Dorsolateral prefrontal cortex (tissue), 120 donors: ENCODE measurements at regions of chr1 and their contacts with region 1.

Region 1: GRCh38 chr1:64823691-64824476 is 79.0 kb downstream of the RAVER2 start:
- DNase-seq: peak in 7 of 10 donors; percentile 45 to 83 (median 56)
- H3K4me3 ChIP-seq: peak overlapping the region in 30 of 59 donors; percentile 4 to 43 (median 25)
- H3K27ac ChIP-seq: peak overlapping the region in 7 of 59 donors; percentile 8 to 54 (median 25)
- H3K27me3 ChIP-seq: no peaks in the 10 kb centered on the region
- CTCF ChIP-seq: peak; percentile 82 to 99 (median 94)

Region 2: DNA sequence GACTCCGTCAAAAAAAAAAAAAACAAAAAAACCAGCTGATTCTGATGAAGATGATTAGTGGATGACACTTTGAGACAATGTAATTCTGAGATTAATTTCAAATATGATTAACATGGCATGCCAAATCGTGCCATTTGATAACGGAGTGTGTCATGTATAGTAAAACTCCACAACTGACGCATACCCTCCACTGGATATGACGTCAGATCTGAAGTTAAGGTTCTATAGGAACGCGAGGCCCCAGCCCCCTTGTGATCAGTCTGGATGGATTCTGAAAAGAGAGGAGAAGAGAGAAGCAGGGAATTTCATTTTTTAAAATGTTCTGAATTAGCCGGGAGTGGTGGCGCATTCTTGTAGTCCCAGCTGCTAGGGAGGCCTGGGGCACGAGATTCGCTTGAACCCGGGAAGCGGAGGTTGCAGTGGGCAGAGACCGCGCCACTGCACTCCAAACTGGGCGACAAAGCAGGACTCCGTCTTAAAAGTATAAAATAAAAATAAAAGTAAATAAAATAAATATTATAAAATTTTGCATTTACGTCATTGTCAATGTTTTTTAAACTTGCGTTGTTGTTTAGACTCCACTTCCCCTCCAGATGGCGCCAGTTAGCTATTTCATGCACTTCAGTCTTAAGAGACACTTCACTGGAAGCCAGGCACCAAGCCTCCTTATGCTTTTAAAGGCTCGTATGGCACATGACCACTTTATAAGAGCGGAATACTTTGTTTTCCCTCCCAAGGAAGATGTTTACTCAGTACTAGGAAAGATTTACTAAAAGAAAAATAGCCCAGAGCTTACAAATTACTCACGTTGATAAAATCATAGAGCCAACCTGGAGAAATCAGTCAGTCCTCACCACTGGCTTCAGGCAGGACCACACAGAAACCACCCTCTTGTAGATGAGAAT is 555.0 kb before region 1 on chr1:
- intact Hi-C with region 1: loop called (anchors 2 to 5 kb)
- DNase-seq: peak in 6 of 10 donors; percentile 54 to 79 (median 60)
- H3K4me3 ChIP-seq: peak overlapping the region in 39 of 59 donors; percentile 1 to 55 (median 38)
- H3K27ac ChIP-seq: peak overlapping the region in 2 of 59 donors; percentile 6 to 34
- H3K27me3 ChIP-seq: no peaks in the 10 kb centered on the region
- CTCF ChIP-seq: peak; percentile 69 to 96 (median 88)

Region 3: DNA sequence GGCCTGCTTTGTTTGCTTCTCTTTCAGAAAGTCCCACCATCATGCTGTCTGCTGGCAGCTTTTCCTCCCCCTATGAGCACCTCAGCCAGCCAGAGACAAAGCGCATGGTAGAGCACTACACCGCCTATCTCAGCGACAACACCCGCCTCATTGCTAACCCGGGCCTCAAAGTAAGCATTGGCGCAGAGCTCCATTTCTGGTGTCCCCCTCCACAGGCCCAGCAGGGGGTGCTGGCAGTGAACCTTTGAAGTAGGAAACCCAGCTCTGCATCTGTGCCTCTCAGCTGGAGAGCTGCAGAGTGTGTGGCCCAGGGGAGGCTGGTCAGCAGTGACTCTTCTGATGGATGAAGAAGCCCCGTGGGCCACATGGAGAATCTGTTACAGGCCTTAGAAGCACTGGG is 160.2 kb before region 1 on chr1:
- intact Hi-C with region 1: no loop called
- DNase-seq: peak in 2 of 10 donors; percentile 26 to 37
- H3K4me3 ChIP-seq: peak overlapping the region in 3 of 59 donors; percentile 8 to 28 (median 12)
- H3K27ac ChIP-seq: peak overlapping the region in 31 of 59 donors; percentile 8 to 71 (median 42)
- H3K27me3 ChIP-seq: no peaks in the 10 kb centered on the region
- CTCF ChIP-seq: peak in 32 of 56 donors; percentile 7 to 45 (median 25)

Region 4: DNA sequence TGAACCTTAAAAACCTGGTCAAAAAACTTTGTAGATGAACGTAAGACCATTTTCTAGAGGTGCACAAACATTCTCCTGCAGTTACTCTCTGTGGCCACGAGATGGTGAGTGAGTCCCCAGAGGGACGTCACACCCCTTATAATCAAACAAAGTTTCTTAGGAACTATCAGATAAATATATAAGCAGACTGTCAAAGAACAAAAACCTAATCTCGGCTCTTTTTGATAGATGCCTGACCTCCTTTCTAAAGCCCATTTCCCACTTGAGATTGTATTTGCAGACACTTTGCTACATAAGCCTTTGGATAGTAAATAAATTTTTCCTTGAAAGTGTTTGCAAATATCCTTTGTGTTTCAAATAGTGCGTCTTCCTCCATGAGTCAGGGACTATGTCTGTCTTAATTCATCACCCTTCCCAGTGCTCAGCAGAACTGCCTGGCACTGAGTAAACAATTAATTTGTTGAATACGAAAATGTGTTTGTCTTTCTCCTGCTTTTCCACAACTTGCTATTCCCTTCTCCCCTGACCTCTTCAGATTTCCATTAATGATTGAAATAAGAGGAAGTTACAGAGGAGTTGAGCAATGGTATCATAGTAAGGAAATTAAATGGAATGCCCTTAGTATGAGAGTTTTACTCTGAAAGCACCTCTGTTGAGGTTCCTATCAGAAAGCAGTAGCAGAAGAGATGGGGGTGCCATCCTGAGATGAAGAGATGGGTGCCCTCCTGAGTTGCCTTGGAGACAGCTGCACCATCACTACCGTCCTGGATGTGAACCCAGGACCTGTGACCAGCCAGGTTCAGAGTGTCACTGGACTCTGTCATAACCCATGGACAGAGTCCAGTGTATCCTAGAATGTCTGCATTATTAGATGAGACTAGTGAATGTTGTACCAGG is 136.8 kb before region 1 on chr1:
- intact Hi-C with region 1: loop called (anchors 5 kb)
- DNase-seq: peak in 1 of 10 donors; percentile 17
- H3K4me3 ChIP-seq: no peak overlapping the region
- H3K27ac ChIP-seq: peak overlapping the region in 7 of 59 donors; percentile 7 to 44 (median 11)
- H3K27me3 ChIP-seq: no peaks in the 10 kb centered on the region
- CTCF ChIP-seq: peak; percentile 53 to 90 (median 81)

Region 5: DNA sequence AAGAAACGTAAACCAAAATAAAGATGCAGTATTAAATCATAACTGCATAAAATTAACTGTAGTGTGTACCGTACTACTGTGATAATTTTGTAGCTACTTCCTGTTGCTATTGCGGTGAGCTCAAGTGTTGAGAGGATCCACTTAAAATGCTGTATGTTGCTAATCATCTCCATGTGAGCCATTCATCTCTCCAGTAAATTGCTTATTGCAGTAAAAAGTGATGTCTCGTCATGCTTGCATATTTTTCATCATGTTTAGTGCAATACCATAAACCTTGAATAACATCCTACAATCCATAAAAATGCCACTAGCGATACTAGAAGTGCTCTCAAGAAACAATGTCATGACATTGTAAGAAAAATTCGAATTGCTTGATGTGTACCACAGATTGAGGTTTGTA is 12.8 kb before region 1 on chr1:
- intact Hi-C with region 1: no loop called
- DNase-seq: no peak
- H3K4me3 ChIP-seq: no peak overlapping the region
- H3K27ac ChIP-seq: no peak overlapping the region
- H3K27me3 ChIP-seq: no peaks in the 10 kb centered on the region
- CTCF ChIP-seq: no peak

Region 6: DNA sequence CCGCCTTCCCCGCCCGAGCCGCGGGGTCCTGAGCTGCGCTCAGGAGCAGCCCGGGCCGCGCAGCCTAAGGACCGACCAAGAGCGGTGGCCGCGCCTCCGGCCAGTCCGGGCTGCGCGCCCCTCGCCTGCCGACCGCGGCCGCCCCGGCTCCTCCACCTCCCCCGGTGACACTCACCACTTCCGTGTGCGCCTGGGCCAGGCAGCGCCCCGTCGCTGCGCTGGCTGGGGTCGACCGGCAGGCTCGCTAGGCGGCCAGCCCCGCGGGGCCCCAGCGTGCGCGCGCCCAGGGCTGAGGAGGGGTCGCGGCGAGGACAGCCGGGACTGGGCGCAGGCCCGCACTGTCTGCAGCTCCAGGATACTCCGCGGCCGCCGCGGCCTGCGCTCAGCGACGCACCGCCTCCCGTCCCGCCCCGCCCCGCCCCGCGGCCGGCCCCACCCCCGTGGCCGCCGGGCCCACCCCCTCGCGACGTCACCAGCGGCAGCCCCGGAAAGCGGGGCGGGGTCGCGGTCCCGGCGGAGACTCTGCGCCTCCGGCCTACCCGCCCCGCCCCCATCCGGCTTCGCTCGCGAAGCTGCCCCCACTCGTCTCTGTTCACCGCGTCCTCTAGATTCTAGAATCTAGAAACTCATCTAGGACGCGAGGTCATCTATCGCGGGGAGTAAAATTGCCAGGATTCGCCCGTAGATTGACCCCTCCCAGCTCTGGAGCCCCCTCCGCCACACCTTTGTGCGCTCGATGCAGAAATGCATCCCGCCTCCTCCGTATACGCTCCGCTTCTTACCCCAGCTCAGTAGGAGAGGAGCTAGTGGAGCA is 142.5 kb after region 1 on chr1 and contains the start of gene JAK1:
- intact Hi-C with region 1: loop called in 1 of 2 experiments (anchors 10 kb)
- DNase-seq: peak; percentile 65 to 92 (median 83)
- H3K4me3 ChIP-seq: peak within 1 kb of the TSS; percentile 65 to 99 (median 87)
- H3K27ac ChIP-seq: peak within 1 kb of the TSS; percentile 39 to 96 (median 88)
- H3K27me3 ChIP-seq: no peaks in the 10 kb centered on the region
- CTCF ChIP-seq: peak in 8 of 56 donors; percentile 3 to 38 (median 14)
- total RNA-seq, gene JAK1: 57.7 to 112 (median 83.0) TPM

Region 7: DNA sequence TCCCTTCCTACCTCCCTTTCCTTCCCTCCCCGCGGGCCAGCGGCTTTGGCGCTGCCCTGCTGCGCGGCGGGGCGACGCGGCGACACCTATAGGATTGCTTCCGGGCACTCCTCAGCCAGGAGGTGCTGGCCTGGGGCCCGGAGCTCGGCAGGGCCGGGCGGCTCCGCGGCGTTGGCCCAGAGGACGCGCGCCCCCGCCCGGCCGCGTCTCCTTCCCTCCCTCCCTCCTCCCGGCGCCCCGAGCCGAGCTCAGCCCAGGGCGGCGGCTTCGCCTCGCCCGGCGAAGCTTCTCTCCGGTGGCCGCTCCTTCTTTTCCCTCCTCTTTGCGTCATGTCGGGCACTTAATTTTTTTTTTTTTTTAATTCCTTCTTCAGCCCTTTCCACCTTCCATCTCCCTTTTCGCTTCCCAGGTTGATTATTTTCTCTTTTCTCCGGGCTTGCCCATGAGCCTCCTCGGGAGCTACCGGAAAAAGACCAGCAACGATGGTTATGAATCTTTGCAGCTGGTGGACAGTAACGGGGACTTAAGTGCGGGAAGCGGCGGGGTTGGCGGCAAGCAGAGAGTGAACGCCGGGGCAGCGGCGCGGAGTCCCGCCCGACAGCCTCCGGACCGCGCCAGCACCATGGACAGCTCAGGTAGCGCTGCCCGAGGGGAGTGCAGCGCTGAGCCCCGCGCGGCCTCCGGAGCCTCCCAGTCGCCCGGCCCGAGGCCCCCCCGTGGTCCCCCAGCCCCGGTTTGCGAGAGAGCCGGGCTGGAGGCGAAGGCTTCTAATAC is 485.6 kb after region 1 on chr1 and contains the start of gene DNAJC6:
- intact Hi-C with region 1: no loop called
- DNase-seq: peak in 9 of 10 donors; percentile 25 to 80 (median 57)
- H3K4me3 ChIP-seq: peak within 1 kb of the TSS; percentile 8 to 76 (median 62)
- H3K27ac ChIP-seq: peak within 1 kb of the TSS in 57 of 59 donors; percentile 18 to 98 (median 73)
- H3K27me3 ChIP-seq: no peaks in the 10 kb centered on the region
- CTCF ChIP-seq: peak in 3 of 56 donors; percentile 8 to 15 (median 14)
- total RNA-seq, gene DNAJC6: 149 to 406 (median 315) TPM